ENCODE measurements at regions of chr1 and their contacts with region 1.

Region 1: GRCh38 chr1:96674911-96675310 is 46.7 kb upstream of the PTBP2 start:
- DNase-seq: no peak
- ATAC-seq: no peak
- H3K4me3 ChIP-seq: no peak overlapping the region
- H3K4me3 Mint-ChIP-seq: no peak overlapping the region
- H3K27ac ChIP-seq: no peak overlapping the region
- H3K27ac Mint-ChIP-seq: no peak overlapping the region
- H3K4me1 ChIP-seq: no peaks in the 10 kb centered on the region
- H3K4me1 Mint-ChIP-seq: no peaks in the 10 kb centered on the region
- H3K27me3 ChIP-seq: no peaks in the 10 kb centered on the region
- H3K27me3 Mint-ChIP-seq: peaks cover 2% of the 10 kb centered on the region
- CTCF ChIP-seq: no peak

Region 2: GRCh38 chr1:96901783-96902363 is 227.0 kb after region 1 on chr1:
- CTCF ChIA-PET with region 1: no interaction called
- POLR2A ChIA-PET with region 1: no interaction called
- intact Hi-C with region 1: loop called in 1 of 2 experiments (anchors 10 kb)
- DNase-seq: no peak
- ATAC-seq: no peak
- H3K4me3 ChIP-seq: no peak overlapping the region
- H3K4me3 Mint-ChIP-seq: no peak overlapping the region
- H3K27ac ChIP-seq: no peak overlapping the region
- H3K27ac Mint-ChIP-seq: no peak overlapping the region
- H3K4me1 ChIP-seq: no peaks in the 10 kb centered on the region
- H3K4me1 Mint-ChIP-seq: no peaks in the 10 kb centered on the region
- H3K27me3 ChIP-seq: no peaks in the 10 kb centered on the region
- H3K27me3 Mint-ChIP-seq: no peaks in the 10 kb centered on the region
- CTCF ChIP-seq: no peak